ENCODE measurements at regions of chr5 and their contacts with region 1.

Region 1: GRCh38 chr5:52915176-52915875 is 73.8 kb upstream of the ITGA2 start:
- DNase-seq: peak; percentile 48
- H3K4me3 ChIP-seq: peak overlapping the region in 1 of 2 donors; percentile 2
- H3K27ac ChIP-seq: no peak overlapping the region
- H3K4me1 ChIP-seq: no peaks in the 10 kb centered on the region
- H3K27me3 ChIP-seq: no peaks in the 10 kb centered on the region
- CTCF ChIP-seq: peak; percentile 70 to 73 (median 71)
- POLR2A ChIP-seq: no peak

Region 2: DNA sequence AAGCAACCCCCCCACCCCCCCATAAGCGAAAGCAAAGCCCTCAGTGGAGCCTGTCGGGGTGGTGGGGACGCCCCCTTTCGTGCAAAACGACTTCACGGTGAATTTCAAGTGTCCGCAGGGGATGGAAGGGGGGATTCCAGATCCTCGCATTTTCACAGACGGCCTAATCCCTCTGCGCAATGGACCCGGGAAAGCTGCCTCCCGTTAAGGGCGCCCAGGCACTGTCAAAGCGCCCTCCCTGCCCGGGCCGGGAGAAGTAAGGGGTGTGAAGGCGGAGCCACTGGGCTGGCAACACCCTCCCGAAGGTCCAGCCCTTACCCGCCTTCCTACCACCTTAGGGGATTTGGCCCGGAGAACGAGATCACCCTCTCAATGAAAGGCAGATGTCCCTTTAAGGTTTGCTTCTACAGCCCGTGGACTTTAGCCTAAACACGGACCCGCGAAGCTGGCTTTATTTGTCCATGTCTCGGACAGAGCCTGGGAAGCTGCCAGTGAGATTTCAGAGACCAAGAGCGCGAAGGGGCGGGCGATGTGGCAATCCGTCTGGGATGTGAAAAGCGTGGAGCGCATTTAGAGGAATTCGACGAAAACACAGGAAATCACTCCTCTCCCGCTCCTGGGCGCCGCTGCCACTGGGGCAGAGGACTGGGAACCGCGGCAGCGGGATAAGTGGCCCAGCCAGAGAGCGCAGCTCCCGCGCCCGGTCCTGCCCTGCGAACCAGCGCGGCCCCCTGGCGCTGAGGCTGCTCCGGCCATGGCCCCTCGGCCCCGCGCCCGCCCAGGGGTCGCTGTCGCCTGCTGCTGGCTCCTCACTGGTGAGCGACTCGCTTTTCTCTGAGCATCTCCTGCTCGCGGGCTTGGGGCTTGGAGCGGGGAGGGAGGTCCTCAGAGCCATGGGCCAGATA is 127.5 kb before region 1 on chr5 and contains the starts of genes ITGA1 and PELO:
- intact Hi-C with region 1: loop called (anchors 1 kb)
- DNase-seq: peak; percentile 58
- H3K4me3 ChIP-seq: peak within 1 kb of the TSS; percentile 48 to 52
- H3K27ac ChIP-seq: peak within 1 kb of the TSS; percentile 85 to 88
- H3K4me1 ChIP-seq: no peaks in the 10 kb centered on the region
- H3K27me3 ChIP-seq: no peaks in the 10 kb centered on the region
- CTCF ChIP-seq: peak; percentile 13 to 60 (median 30)
- POLR2A ChIP-seq: no peak
- total RNA-seq, gene ITGA1: 43.7 to 78.3 TPM
- total RNA-seq, gene PELO: 14.9 to 18.8 TPM